Mammary epithelial cell (primary cell): ENCODE measurements at regions of chr2 and their contacts with region 1.

Region 1: GRCh38 chr2:8986327-8986976 is 17.0 kb downstream of the MBOAT2 start:
- DNase-seq: no peak
- H3K4me3 ChIP-seq: no peak overlapping the region
- H3K27ac ChIP-seq: no peak overlapping the region
- H3K4me1 ChIP-seq: peaks cover 22% of the 10 kb centered on the region
- H3K27me3 ChIP-seq: no peaks in the 10 kb centered on the region
- CTCF ChIP-seq: peak; percentile 6 to 22

Region 2: DNA sequence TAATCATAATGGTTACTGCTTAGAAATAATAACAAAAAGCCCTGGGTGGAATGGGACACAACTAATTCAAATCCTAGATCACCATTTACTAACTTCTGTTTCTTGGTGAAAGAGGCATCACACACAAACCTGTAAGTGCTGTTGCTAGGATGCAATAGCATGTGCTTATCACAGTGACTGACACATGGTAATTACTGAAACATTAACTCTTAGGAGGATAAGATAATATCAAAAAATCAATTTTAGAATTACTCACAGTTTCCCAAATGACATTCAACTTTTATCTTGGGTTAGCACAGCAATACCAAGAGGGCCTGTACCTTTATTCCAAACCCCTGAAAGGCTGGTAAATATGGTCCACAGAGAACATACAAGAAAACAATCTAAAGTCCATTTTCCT is 52.1 kb before region 1 on chr2:
- CTCF ChIA-PET with region 1: no interaction called
- dilution Hi-C with region 1: no loop called
- in situ Hi-C with region 1: no loop called
- intact Hi-C with region 1: no loop called
- DNase-seq: no peak
- H3K4me3 ChIP-seq: no peak overlapping the region
- H3K27ac ChIP-seq: no peak overlapping the region
- H3K4me1 ChIP-seq: no peaks in the 10 kb centered on the region
- H3K27me3 ChIP-seq: no peaks in the 10 kb centered on the region
- CTCF ChIP-seq: no peak

Region 3: DNA sequence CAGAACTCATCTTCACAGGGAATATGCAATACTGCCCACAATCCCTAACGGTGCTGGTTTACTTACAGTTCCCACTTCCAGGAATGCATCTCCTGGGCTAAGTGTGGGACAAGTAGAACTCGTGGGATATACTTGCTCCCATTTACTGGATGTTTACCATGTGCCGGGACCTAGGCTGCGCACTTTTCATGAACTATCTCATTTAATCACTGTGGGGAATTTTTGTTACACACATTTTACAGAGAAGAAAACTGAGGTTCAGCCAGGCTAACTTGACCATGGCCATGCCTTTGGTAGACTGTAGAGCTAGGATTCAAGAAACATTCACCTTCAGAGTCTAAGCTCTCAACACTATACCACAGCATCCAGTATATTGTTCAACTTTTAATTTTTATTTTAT is 41.4 kb after region 1 on chr2:
- CTCF ChIA-PET with region 1: no interaction called
- dilution Hi-C with region 1: no loop called
- in situ Hi-C with region 1: no loop called
- intact Hi-C with region 1: loop called (anchors 1 kb)
- DNase-seq: no peak
- H3K4me3 ChIP-seq: no peak overlapping the region
- H3K27ac ChIP-seq: no peak overlapping the region
- H3K4me1 ChIP-seq: peaks cover 6% of the 10 kb centered on the region
- H3K27me3 ChIP-seq: no peaks in the 10 kb centered on the region
- CTCF ChIP-seq: no peak

Region 4: DNA sequence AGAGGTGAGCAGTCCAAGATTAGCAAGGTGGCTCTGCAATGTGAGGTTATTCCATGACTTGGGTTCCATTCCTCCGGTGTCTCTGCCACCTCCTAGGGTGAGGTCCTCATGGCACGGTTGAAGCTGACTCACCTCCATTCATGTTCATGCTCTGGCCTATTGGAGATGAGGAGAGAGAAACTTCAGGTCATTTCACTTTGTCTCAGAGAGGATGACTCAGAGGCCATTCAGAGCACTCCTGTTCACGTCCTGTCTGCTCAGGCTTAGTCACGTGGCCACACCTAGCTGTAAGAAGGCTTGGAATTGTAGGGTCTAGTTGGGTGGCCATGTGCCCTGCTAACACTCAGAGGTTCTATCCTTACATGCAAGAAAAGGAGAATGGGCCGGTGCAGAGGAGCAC is 84.6 kb after region 1 on chr2:
- CTCF ChIA-PET with region 1: no interaction called
- dilution Hi-C with region 1: no loop called
- in situ Hi-C with region 1: loop called in 1 of 2 experiments (anchors 10 kb)
- intact Hi-C with region 1: no loop called
- DNase-seq: peak; percentile 99
- H3K4me3 ChIP-seq: no peak overlapping the region
- H3K27ac ChIP-seq: peak overlapping the region; percentile 89
- H3K4me1 ChIP-seq: peaks cover 33% of the 10 kb centered on the region
- H3K27me3 ChIP-seq: no peaks in the 10 kb centered on the region
- CTCF ChIP-seq: no peak